ENCODE measurements at regions of chr6 and their contacts with region 1.

Region 1: GRCh38 chr6:130872250-130873095 is 45.3 kb downstream of the SMLR1 start:
- DNase-seq: no peak
- ATAC-seq: peak; percentile 93
- H3K4me3 ChIP-seq: no peak overlapping the region
- H3K27ac ChIP-seq: no peak overlapping the region
- H3K4me1 ChIP-seq: no peaks in the 10 kb centered on the region
- H3K27me3 ChIP-seq: no peaks in the 10 kb centered on the region
- CTCF ChIP-seq: peak; percentile 81 to 92 (median 90)
- EP300 ChIP-seq: no peak
- POLR2A ChIP-seq: no peak
- RAD21 ChIP-seq: peak; percentile 66

Region 2: GRCh38 chr6:130848945-130849344 is 23.5 kb before region 1 on chr6:
- CTCF ChIA-PET with region 1: interaction called, 32 read pairs
- POLR2A ChIA-PET with region 1: no interaction called
- RAD21 ChIA-PET with region 1: no interaction called
- SMC1A ChIA-PET with region 1: interaction called, 4 read pairs
- in situ Hi-C with region 1: no loop called
- intact Hi-C with region 1: no loop called
- DNase-seq: no peak
- ATAC-seq: peak; percentile 99
- H3K4me3 ChIP-seq: no peak overlapping the region
- H3K27ac ChIP-seq: no peak overlapping the region
- H3K4me1 ChIP-seq: no peaks in the 10 kb centered on the region
- H3K27me3 ChIP-seq: no peaks in the 10 kb centered on the region
- CTCF ChIP-seq: no peak
- EP300 ChIP-seq: no peak
- POLR2A ChIP-seq: no peak
- RAD21 ChIP-seq: no peak